ENCODE measurements at regions of chr12 and their contacts with region 1.

Region 1: GRCh38 chr12:12837025-12837872 is 24.1 kb downstream of the DDX47 start:
- DNase-seq: peak; percentile 75 to 81
- ATAC-seq: peak; percentile 70 to 76
- H3K4me3 ChIP-seq: no peak overlapping the region
- H3K27ac ChIP-seq: peak overlapping the region; percentile 70 to 88
- H3K4me1 ChIP-seq: peaks cover 69% of the 10 kb centered on the region
- CTCF ChIP-seq: peak; percentile 79
- EP300 ChIP-seq: no peak
- POLR2A ChIP-seq: no peak
- RAD21 ChIP-seq: peak; percentile 79

Region 2: DNA sequence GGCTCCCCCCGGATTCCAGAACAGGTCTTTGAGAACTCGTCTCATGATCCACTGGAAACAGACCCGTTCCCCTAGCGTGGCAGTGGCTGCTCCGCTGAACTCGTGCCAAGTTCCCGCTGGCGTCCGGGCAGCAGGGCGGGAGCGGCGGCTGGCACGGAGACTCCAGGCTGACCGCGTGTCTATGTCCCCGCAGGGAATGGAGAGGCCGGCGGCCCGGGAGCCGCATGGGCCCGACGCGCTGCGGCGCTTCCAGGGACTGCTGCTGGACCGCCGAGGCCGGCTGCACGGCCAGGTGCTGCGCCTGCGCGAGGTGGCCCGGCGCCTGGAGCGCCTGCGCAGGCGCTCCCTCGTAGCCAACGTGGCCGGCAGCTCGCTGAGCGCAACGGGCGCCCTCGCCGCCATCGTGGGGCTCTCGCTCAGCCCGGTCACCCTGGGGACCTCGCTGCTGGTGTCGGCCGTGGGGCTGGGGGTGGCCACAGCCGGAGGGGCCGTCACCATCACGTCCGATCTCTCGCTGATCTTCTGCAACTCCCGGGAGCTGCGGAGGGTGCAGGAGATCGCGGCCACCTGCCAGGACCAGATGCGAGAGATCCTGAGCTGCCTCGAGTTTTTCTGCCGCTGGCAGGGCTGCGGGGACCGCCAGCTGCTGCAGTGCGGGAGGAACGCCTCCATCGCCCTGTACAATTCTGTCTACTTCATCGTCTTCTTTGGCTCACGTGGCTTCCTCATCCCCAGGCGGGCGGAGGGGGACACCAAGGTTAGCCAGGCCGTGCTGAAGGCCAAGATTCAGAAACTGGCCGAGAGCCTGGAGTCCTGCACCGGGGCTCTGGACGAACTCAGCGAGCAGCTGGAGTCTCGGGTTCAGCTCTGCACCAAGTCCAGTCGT is 50.3 kb before region 1 on chr12:
- CTCF ChIA-PET with region 1: interaction called, 28 read pairs
- POLR2A ChIA-PET with region 1: interaction called, 3 read pairs
- DNase-seq: peak; percentile 87 to 91
- ATAC-seq: peak; percentile 90 to 94
- H3K4me3 ChIP-seq: peak overlapping the region; percentile 44
- H3K27ac ChIP-seq: peak overlapping the region; percentile 85 to 94
- H3K4me1 ChIP-seq: peaks cover 35% of the 10 kb centered on the region
- CTCF ChIP-seq: no peak
- EP300 ChIP-seq: no peak
- POLR2A ChIP-seq: peak; percentile 89
- RAD21 ChIP-seq: no peak

Region 3: GRCh38 chr12:12819671-12820311 is 17.5 kb before region 1 on chr12:
- CTCF ChIA-PET with region 1: interaction called, 78 read pairs
- POLR2A ChIA-PET with region 1: interaction called, 5 read pairs
- DNase-seq: peak; percentile 50 to 83
- ATAC-seq: peak; percentile 92 to 93
- H3K4me3 ChIP-seq: no peak overlapping the region
- H3K27ac ChIP-seq: peak overlapping the region; percentile 59 to 74
- H3K4me1 ChIP-seq: peaks cover 79% of the 10 kb centered on the region
- CTCF ChIP-seq: no peak
- EP300 ChIP-seq: peak in 1 of 2 experiments; percentile 52; a peak in 1 of 5 replicates
- POLR2A ChIP-seq: no peak
- RAD21 ChIP-seq: no peak

Region 4: GRCh38 chr12:12872139-12872881 is 35.1 kb after region 1 on chr12:
- CTCF ChIA-PET with region 1: interaction called, 34 read pairs
- POLR2A ChIA-PET with region 1: interaction called, 4 read pairs
- DNase-seq: peak; percentile 71 to 95
- ATAC-seq: peak; percentile 75
- H3K4me3 ChIP-seq: peak overlapping the region; percentile 28
- H3K27ac ChIP-seq: peak overlapping the region; percentile 97 to 98
- H3K4me1 ChIP-seq: peaks cover 66% of the 10 kb centered on the region
- CTCF ChIP-seq: no peak
- EP300 ChIP-seq: peak; percentile 92 to 96; a peak in 4 of 5 replicates
- POLR2A ChIP-seq: no peak
- RAD21 ChIP-seq: peak in 1 of 2 experiments; percentile 32; a peak in 3 of 5 replicates

Region 5: GRCh38 chr12:12890815-12891645 is 53.8 kb after region 1 on chr12 and contains the start of gene GPRC5A:
- CTCF ChIA-PET with region 1: interaction called, 55 read pairs
- POLR2A ChIA-PET with region 1: interaction called, 18 read pairs
- DNase-seq: peak; percentile 90 to 99
- ATAC-seq: peak; percentile 87 to 89
- H3K4me3 ChIP-seq: peak within 1 kb of the TSS; percentile 54
- H3K27ac ChIP-seq: peak within 1 kb of the TSS; percentile 94
- H3K4me1 ChIP-seq: peaks cover 47% of the 10 kb centered on the region
- CTCF ChIP-seq: peak; percentile 40
- EP300 ChIP-seq: peak; percentile 61 to 79; a peak in 3 of 5 replicates
- POLR2A ChIP-seq: peak; percentile 99
- RAD21 ChIP-seq: peak; percentile 63 to 64
- polyA plus RNA-seq, gene GPRC5A: 296 and 321 TPM in 2 replicates

Region 6: GRCh38 chr12:12916135-12916944 is 79.1 kb after region 1 on chr12:
- CTCF ChIA-PET with region 1: interaction called, 26 read pairs
- POLR2A ChIA-PET with region 1: no interaction called
- DNase-seq: peak; percentile 66 to 86
- ATAC-seq: peak; percentile 75 to 79
- H3K4me3 ChIP-seq: no peak overlapping the region
- H3K27ac ChIP-seq: peak overlapping the region; percentile 29 to 47; a peak in 4 of 6 replicates
- H3K4me1 ChIP-seq: peaks cover 49% of the 10 kb centered on the region
- CTCF ChIP-seq: peak; percentile 93
- EP300 ChIP-seq: no peak
- POLR2A ChIP-seq: no peak
- RAD21 ChIP-seq: peak; percentile 95 to 96

Measured in A549 (cell line).